ENCODE measurements at regions of chr16 and their contacts with region 1.

Region 1: DNA sequence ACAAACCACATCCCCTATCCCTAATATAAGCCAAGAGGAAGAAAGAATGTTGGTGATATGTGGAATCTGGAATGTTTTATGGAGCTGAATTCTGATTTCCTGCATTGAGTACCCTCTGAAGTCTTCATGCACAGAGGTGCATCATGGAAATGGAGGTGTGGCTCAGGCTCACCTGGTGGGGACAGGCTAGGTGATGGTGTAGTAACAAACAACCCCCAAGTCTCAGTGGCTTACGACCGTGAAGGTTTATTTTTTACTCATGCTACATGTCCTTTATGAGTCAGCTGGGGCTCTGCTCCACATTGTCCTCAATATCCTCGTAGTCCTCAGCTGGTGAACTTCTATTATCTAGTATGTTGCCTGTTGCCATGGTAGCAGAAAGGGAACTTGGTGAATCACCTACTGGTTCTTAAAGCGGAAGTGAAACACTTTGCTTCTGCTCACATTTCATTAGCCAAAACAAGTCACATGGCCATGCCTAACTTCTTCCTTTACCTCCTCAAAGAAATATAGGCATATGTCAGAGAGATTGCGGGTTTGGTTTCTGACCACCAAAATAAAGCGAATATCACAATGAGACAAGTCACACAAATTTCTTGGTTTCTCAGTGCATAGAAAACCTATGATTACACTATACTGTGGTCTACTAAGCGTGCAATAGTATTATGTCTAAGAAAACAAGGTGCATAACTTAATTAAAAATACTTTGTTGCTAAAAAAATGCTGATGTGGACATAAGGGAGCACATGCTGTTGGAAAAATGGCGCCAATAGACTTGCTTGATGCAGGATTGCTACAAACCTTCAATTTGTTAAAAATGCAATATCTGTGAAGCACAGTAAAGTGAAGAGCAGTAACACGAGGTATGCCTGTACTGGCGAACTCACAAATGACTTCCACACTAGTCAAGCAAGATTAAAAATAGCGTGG is at the start of gene PMFBP1:
- DNase-seq: peak; percentile 93
- ATAC-seq: peak; percentile 88
- H3K4me3 ChIP-seq: no peak within 1 kb of the TSS
- H3K4me3 Mint-ChIP-seq: peak within 1 kb of the TSS; percentile 52
- H3K27ac ChIP-seq: peak within 1 kb of the TSS; percentile 54 to 80
- H3K27ac Mint-ChIP-seq: peak within 1 kb of the TSS; percentile 91
- H3K4me1 ChIP-seq: peaks cover 12 to 13% of the 10 kb centered on the region in 2 donors
- H3K4me1 Mint-ChIP-seq: peaks cover 11% of the 10 kb centered on the region
- H3K27me3 ChIP-seq: no peaks in the 10 kb centered on the region
- H3K27me3 Mint-ChIP-seq: peaks cover 2% of the 10 kb centered on the region
- CTCF ChIP-seq: no peak
- total RNA-seq, gene PMFBP1: 9.5 and 9.7 TPM in 2 replicates

Region 2: GRCh38 chr16:72203401-72203800 is 31.0 kb after region 1 on chr16:
- CTCF ChIA-PET with region 1: no interaction called
- POLR2A ChIA-PET with region 1: no interaction called
- intact Hi-C with region 1: loop called (anchors 2 kb)
- DNase-seq: peak; percentile 42
- ATAC-seq: peak; percentile 54
- H3K4me3 ChIP-seq: peak overlapping the region in 2 of 5 experiments; percentile 3
- H3K4me3 Mint-ChIP-seq: peak overlapping the region; percentile 30
- H3K27ac ChIP-seq: peak overlapping the region; percentile 34 to 63
- H3K27ac Mint-ChIP-seq: peak overlapping the region; percentile 2
- H3K4me1 ChIP-seq: peaks cover 20 to 23% of the 10 kb centered on the region in 2 donors
- H3K4me1 Mint-ChIP-seq: peaks cover 19% of the 10 kb centered on the region
- H3K27me3 ChIP-seq: no peaks in the 10 kb centered on the region
- H3K27me3 Mint-ChIP-seq: no peaks in the 10 kb centered on the region
- CTCF ChIP-seq: no peak

Region 3: GRCh38 chr16:72300892-72301291 is 128.5 kb after region 1 on chr16:
- CTCF ChIA-PET with region 1: no interaction called
- POLR2A ChIA-PET with region 1: no interaction called
- intact Hi-C with region 1: no loop called
- DNase-seq: no peak
- ATAC-seq: no peak
- H3K4me3 ChIP-seq: no peak overlapping the region
- H3K4me3 Mint-ChIP-seq: no peak overlapping the region
- H3K27ac ChIP-seq: no peak overlapping the region
- H3K27ac Mint-ChIP-seq: no peak overlapping the region
- H3K4me1 ChIP-seq: no peaks in the 10 kb centered on the region
- H3K4me1 Mint-ChIP-seq: no peaks in the 10 kb centered on the region
- H3K27me3 ChIP-seq: no peaks in the 10 kb centered on the region
- H3K27me3 Mint-ChIP-seq: no peaks in the 10 kb centered on the region
- CTCF ChIP-seq: no peak

Measured in B cell (primary cell).